Activated CD8-positive, alpha-beta memory T cell treated with anti-CD3 and anti-CD28 coated beads, Interleukin-2, amount 10 ng/mL, durations not matched to agents 7 days and 5 days (primary cell): ENCODE measurements at regions of chr17 and their contacts with region 1.

Region 1: DNA sequence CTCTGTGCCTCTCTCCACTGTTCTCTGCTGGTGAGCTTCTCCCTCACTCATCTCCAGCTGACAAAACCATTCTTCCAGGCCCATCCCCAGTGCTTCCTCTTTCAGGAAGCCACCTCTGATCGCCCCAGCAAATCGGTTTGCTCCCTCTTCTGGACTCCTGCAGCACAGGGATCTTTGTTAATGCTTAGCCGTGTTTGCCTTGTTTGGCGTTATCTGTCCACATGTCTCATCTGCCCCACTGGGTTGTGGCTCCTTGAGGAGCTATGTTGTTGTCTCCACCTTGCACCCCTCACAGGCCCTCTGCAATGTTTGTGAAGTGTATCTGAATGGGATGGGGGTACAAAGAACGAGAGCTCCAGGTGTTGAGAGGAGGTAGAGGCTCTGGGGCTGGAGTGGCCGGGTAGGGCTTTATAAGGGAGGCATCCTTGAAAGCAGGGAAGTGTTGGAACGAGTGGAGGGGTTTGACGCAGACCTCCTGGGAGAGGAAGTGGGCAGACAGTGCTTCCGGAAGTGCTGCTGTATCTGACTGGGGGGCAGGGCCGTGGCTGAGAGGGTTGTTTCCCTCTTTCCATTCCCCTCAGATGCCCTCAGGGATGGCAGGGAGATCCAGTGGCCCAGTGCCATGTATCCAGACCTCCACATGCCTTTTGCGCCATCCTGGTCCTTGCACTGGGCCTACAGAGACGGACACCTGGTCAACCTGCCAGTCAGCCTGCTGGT is 27.8 kb downstream of the CASKIN2 start:
- DNase-seq: peak; percentile 84
- ATAC-seq: peak; percentile 90
- H3K4me3 Mint-ChIP-seq: peak overlapping the region; percentile 50
- H3K27ac Mint-ChIP-seq: peak overlapping the region; percentile 95
- H3K4me1 Mint-ChIP-seq: peaks cover 23% of the 10 kb centered on the region
- H3K27me3 Mint-ChIP-seq: no peaks in the 10 kb centered on the region

Region 2: DNA sequence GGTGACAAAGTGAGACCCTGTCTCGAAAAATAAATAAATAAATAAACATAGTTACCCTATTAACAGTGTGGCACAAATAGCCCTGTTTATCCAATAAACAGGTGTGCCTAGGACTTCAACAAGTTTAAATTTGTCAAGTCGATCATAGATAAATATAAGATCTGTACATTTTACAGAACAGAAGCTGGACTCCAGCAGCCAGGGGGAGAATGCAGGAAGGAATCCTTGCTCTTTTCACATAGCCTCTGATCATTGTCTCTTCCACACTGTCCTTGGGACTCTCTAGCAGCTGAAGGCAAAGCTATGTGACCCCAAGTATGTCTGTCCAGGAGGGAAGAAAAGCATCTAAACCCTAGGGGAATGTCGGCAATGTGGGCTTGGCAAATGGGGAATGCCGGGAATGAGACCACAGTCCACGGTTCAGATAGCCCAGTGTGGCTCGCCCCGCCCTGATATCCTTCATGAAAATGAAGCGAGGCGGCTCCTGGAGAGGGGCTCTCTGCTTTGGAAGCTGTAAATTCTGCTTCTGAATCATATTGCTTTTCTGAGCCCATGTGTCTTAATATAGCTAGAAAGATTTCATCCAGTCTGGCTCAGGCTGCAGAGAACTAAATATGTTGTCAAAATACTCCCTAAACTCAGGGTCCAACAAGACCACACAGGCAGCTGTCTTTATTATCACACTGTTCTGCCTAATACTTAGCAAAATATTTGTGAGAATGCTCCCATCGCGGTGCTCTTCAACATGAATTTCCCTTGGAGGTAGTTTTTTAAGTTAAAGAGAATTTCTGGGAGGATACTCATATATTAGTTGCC is 57.1 kb before region 1 on chr17:
- CTCF ChIA-PET with region 1: interaction called, 10 read pairs
- DNase-seq: no peak
- ATAC-seq: no peak
- H3K4me3 Mint-ChIP-seq: no peak overlapping the region
- H3K27ac Mint-ChIP-seq: no peak overlapping the region
- H3K4me1 Mint-ChIP-seq: peaks cover 22% of the 10 kb centered on the region
- H3K27me3 Mint-ChIP-seq: peaks cover 34% of the 10 kb centered on the region

Region 3: DNA sequence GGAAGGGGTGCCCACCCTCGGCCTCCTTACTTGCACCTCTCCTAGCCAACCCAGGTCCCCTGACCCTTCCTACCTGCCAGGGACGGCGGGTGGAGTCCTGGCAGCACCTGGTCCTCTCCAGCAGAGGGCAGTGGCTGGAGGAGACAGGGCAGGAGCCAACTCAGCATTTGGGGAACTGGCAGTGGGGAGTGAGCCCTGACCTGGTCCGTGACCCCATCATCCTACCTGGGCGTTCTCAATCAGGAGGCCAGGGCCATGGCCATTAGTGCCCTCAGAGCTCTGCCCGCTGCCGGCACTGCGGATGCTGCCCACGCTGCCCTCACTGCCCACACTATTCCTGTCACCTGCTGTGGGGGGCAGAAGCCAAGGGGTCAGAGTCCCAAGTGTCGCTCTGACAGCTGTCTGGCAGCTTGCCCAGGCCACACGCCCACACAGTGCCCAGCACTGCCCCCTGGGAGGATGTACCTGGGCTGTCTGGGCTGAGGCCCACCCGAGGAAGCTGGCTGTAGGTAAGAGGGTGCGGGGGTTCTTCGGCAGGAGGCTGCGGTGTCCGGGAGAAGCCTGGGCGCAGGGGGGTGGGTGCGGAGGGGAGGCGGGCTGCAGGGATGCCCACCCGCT is 16.9 kb after region 1 on chr17:
- CTCF ChIA-PET with region 1: no interaction called
- DNase-seq: peak; percentile 61
- ATAC-seq: peak; percentile 66
- H3K4me3 Mint-ChIP-seq: no peak overlapping the region
- H3K27ac Mint-ChIP-seq: no peak overlapping the region
- H3K4me1 Mint-ChIP-seq: peaks cover 2% of the 10 kb centered on the region
- H3K27me3 Mint-ChIP-seq: no peaks in the 10 kb centered on the region